GM12878 (cell line): ENCODE measurements at regions of chr2 and their contacts with region 1.

Region 1: DNA sequence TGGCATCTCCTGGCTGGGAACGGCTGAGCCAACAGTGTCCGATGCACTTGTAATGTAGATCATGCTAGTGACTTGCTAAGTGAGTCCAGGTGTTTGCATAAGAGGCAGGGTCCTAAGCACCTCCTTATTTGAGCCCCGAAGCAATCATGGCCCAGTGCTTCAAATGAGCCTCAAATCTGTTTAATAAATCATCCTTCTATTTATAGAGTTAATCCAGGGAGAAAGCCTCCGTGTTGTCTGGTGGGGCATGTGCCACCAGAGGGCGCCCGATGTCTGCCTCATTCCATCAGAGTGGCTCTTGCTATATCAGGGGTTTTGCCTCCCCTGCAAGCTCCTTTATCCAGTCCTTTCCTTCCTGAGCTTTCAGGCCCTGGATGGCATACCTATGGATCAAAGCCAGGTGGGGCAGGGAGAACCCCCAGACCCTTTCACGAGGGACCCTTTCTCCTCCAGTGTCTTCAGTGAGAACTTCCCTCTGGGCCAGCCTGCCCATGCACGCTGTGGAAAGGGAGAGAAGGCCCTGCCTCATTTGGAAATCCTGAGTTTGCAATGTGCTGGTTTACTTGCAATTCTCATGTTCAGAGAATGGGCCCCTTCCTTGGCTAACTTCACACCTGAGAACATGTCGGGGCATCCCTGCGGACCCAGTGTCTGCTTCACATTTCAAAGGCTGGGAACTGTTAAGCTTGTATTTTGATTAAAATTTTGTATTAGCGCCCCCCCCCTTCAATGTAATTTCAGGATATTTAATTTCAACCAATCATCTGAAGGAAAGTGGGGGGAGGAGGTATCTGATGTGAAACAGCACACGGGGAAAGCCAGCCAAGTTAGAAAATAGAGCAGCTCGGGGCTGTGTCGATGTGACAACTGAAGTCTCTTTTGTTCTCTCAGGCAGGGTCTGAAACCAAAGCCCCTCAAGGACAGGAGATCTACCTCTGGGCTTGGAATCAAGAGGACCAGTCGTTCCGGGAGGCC is 39.7 kb downstream of the RDH14 start:
- DNase-seq: no peak
- ATAC-seq: peak; percentile 97
- H3K4me3 ChIP-seq: no peak overlapping the region
- H3K27ac ChIP-seq: no peak overlapping the region
- H3K4me1 ChIP-seq: no peaks in the 10 kb centered on the region
- H3K27me3 ChIP-seq: peaks cover 0 to 2% of the 10 kb centered on the region in 2 experiments; a peak in 2 of 4 replicates
- CTCF ChIP-seq: peak; percentile 80 to 84 (median 84)
- EP300 ChIP-seq: no peak
- POLR2A ChIP-seq: no peak
- RAD21 ChIP-seq: peak; percentile 94

Region 2: DNA sequence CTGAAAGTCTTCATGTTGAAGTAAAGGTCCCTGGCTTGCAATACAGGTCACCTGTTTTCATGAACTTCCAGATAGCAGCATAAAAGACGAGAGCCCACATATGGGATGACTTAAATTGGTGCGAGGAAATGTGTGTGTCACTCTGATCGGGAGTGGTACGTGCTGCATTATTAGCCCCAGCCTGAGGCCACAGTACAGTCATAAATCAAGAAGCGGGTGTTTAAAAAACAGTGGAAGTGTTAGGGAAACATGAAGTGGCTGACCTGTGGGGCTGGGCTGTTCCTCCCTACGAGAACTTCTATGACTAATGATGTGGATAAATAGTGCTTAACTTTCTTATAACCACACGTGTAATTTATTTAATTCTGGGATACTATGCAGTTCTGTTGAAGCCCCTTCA is 15.4 kb after region 1 on chr2:
- CTCF ChIA-PET with region 1: interaction called, 11 read pairs
- POLR2A ChIA-PET with region 1: no interaction called
- RAD21 ChIA-PET with region 1: interaction called, 3 read pairs
- SMC1A ChIA-PET with region 1: no interaction called
- in situ Hi-C with region 1: no loop called
- intact Hi-C with region 1: no loop called
- DNase-seq: no peak
- ATAC-seq: no peak
- H3K4me3 ChIP-seq: no peak overlapping the region
- H3K27ac ChIP-seq: no peak overlapping the region
- H3K4me1 ChIP-seq: no peaks in the 10 kb centered on the region
- H3K27me3 ChIP-seq: no peaks in the 10 kb centered on the region
- CTCF ChIP-seq: no peak
- EP300 ChIP-seq: no peak
- POLR2A ChIP-seq: no peak
- RAD21 ChIP-seq: no peak

Region 3: GRCh38 chr2:18560031-18560796 is 39.5 kb after region 1 on chr2 and contains the start of gene RDH14:
- CTCF ChIA-PET with region 1: interaction called, 12 read pairs
- POLR2A ChIA-PET with region 1: no interaction called
- RAD21 ChIA-PET with region 1: interaction called, 5 read pairs
- SMC1A ChIA-PET with region 1: interaction called, 6 read pairs
- in situ Hi-C with region 1: no loop called
- intact Hi-C with region 1: no loop called
- DNase-seq: peak; percentile 69
- ATAC-seq: peak; percentile 96
- H3K4me3 ChIP-seq: peak within 1 kb of the TSS; percentile 82
- H3K27ac ChIP-seq: peak within 1 kb of the TSS; percentile 84
- H3K4me1 ChIP-seq: no peaks in the 10 kb centered on the region
- H3K27me3 ChIP-seq: no peaks in the 10 kb centered on the region
- CTCF ChIP-seq: no peak
- EP300 ChIP-seq: no peak
- POLR2A ChIP-seq: peak; percentile 86
- RAD21 ChIP-seq: no peak
- polyA plus RNA-seq, gene RDH14: 15.5 to 17.3 TPM

Region 4: DNA sequence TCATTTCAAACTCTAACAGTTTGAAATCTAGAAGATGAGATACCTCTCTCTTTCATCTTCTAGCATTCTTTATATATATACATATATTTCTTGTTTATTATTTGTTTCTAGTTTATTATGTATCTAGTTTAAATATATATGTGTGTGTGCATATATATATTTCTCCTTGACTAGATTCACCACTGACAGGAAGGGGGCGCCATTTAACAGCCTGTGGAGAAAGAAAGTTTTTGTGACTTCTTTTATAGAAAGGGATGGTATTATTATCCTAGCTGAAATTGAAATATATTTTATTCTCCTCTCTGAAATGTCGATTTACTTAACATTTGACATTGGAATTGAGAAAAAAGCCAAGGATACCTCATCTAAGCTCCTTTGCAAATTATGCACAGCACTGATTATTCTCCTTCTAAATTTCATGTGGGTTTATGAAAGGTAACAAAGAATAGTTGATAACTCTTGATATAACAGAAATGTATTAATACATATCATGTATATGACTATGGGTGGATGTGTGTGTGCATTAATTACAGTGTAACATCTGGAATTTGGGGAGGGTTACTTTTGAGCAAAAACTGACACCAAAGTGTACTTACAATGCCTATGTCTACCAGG is 229.3 kb after region 1 on chr2:
- CTCF ChIA-PET with region 1: interaction called, 10 read pairs
- POLR2A ChIA-PET with region 1: no interaction called
- RAD21 ChIA-PET with region 1: interaction called, 3 read pairs
- SMC1A ChIA-PET with region 1: interaction called, 3 read pairs
- in situ Hi-C with region 1: no loop called
- intact Hi-C with region 1: loop called (anchors 2 kb)
- DNase-seq: no peak
- ATAC-seq: peak; percentile 56
- H3K4me3 ChIP-seq: no peak overlapping the region
- H3K27ac ChIP-seq: no peak overlapping the region
- H3K4me1 ChIP-seq: no peaks in the 10 kb centered on the region
- H3K27me3 ChIP-seq: no peaks in the 10 kb centered on the region
- CTCF ChIP-seq: peak; percentile 43 to 69 (median 46); a peak in 5 of 6 replicates
- EP300 ChIP-seq: no peak
- POLR2A ChIP-seq: no peak
- RAD21 ChIP-seq: peak; percentile 89

Region 5: DNA sequence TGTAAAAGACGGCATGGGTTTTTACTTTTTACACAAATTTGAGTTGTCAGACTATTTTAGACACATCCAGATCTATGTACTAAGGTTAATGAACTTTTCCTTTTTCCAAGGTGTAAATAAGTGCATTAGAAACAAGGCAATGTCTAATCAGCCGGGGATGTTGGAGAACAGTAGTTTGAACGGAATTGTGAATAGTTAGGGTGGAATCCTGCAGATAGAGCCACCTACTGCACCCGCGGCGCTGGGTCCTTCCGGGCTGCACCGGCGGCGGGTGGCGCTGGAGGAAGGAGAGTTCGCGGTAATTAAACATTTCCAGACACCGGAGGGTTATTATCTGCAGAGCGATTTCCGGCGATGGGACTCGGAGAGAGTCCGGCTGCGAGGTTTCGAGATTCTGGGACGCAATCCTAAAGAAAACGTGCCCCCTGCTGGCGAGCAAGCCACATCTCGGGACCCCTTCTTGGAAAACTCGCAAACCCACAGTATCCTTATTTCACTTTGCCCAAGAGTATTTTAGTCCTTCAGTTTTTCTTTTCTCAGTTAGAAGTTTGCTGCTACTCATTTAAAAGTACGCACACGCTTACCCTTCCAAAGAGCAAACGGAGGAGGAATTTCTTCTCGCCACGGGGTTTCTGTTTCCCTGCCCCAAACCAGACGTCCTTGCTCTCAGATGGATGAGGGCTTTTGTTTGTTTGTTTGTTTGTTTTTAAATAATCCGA is 842.2 kb after region 1 on chr2:
- CTCF ChIA-PET with region 1: no interaction called
- POLR2A ChIA-PET with region 1: no interaction called
- RAD21 ChIA-PET with region 1: no interaction called
- SMC1A ChIA-PET with region 1: interaction called, 3 read pairs
- in situ Hi-C with region 1: loop called (anchors 10 kb)
- intact Hi-C with region 1: loop called (anchors 5 kb)
- DNase-seq: no peak
- ATAC-seq: peak; percentile 78
- H3K4me3 ChIP-seq: peak overlapping the region; percentile 64
- H3K27ac ChIP-seq: no peak overlapping the region
- H3K4me1 ChIP-seq: peaks cover 6% of the 10 kb centered on the region; the same call in 1 of the 2 replicates
- H3K27me3 ChIP-seq: peaks cover 20 to 51% of the 10 kb centered on the region in 2 experiments
- CTCF ChIP-seq: peak; percentile 51 to 68 (median 62); a peak in 5 of 6 replicates
- EP300 ChIP-seq: no peak
- POLR2A ChIP-seq: no peak
- RAD21 ChIP-seq: peak; percentile 60